Ovary (tissue), 10 donors: ENCODE measurements at regions of chr1 and their contacts with region 1.

Region 1: GRCh38 chr1:87084244-87084836 is 169.9 kb downstream of the HS2ST1 start:
- DNase-seq: no peak
- H3K4me3 ChIP-seq: no peak overlapping the region
- H3K27ac ChIP-seq: no peak overlapping the region
- H3K4me1 ChIP-seq: no peaks in the 10 kb centered on the region
- H3K27me3 ChIP-seq: no peaks in the 10 kb centered on the region
- CTCF ChIP-seq: peak; percentile 26 to 49 (median 45)
- EP300 ChIP-seq: no peak
- POLR2A ChIP-seq: no peak

Region 2: DNA sequence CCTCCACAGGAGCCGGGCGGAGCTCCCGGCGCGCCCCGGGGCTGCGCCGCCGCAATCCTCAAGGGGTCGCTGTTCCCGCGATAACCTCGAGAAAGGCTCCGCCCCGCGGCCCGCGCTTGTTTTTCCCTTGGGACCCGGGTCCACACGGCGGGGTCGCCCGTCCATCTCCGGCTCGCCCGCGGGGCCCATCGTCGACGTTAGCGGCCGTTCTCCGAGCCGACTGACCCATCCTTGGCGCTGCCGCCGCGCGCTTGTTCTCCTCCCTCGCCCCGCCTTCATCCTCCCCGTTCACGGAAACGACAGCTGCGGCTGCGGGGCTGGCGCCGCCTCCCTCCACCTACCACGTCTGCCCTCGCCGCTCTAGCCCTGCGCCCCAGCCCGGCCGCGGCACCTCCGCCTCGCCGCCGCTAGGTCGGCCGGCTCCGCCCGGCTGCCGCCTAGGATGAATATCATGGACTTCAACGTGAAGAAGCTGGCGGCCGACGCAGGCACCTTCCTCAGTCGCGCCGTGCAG is 379.8 kb before region 1 on chr1 and contains the start of gene SH3GLB1:
- intact Hi-C with region 1: loop called in 1 of 4 experiments (anchors 10 kb)
- DNase-seq: peak; percentile 87 to 95 (median 93)
- H3K4me3 ChIP-seq: peak within 1 kb of the TSS; percentile 96
- H3K27ac ChIP-seq: peak within 1 kb of the TSS; percentile 81 to 96
- H3K4me1 ChIP-seq: peaks cover 2% of the 10 kb centered on the region
- H3K27me3 ChIP-seq: no peaks in the 10 kb centered on the region
- CTCF ChIP-seq: peak; percentile 79 to 95 (median 85)
- EP300 ChIP-seq: no peak
- POLR2A ChIP-seq: peak; percentile 49
- total RNA-seq, gene SH3GLB1: 23.7 to 58.5 (median 49.5) TPM

Region 3: DNA sequence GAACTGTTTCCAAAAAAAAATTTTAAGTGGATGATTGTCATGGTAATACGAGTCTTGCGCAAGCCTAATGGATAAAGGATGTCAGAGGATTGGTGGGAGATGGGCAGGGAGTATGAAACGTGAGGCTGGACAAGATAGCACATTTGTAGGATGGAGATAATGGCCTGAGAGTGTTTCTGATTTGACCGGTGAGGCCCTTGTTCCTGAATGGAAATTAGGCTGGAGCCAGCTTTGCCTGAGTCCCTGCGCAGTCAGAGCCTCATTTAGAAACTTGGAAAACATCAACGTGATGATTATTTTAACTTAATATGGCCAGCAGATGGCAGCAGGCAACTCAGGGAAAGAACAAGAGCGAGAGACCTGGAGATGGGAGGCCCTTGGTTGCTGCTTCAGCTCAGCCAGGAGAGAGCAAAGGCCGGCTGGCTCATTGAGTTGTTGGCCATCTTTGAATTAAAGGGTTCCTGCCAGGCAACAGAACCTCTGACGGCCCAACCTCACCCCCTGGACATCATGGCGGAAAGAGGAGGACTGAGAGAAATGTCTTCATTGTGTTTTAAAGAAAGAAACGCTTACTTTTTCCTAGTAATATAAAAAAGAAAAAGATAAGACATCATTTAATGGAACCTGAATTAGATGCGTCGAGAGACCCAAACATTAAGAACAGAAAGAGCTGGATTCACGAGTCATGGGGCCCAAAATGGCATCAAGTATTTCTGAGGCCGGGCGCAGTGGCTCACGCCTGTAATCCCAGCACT is 250.7 kb before region 1 on chr1:
- intact Hi-C with region 1: loop called (anchors 5 to 10 kb)
- DNase-seq: peak; percentile 51 to 74 (median 69)
- H3K4me3 ChIP-seq: no peak overlapping the region
- H3K27ac ChIP-seq: no peak overlapping the region
- H3K4me1 ChIP-seq: no peaks in the 10 kb centered on the region
- H3K27me3 ChIP-seq: no peaks in the 10 kb centered on the region
- CTCF ChIP-seq: peak; percentile 30 to 63 (median 35)
- EP300 ChIP-seq: no peak
- POLR2A ChIP-seq: no peak

Region 4: DNA sequence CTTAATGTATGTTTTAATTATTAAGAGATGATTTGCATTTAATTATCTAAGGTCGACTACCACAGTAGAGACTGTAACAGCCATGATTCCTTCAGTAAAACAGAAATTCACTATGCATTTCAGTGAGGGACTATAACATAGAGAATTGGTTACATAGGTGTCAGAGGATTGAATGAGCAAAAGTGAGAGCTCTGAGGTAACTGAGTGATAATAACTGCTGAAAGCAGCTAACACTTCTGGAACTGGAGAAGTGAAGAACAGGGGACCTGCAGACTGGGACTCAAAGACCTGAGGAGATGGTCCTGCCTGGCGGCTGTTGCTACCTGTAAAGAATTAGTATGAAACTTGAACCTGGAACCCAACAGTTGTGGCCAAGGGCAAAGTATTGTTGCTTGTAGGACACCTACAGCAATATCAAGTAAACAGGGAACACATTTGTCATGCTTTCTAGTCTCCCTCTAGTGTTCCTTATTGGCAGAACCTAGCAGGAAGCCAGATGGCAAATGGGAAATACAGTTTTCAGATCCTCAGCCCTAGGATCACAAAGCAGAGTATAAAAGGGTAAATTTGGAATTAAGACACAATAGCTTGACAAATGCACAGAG is 59.3 kb before region 1 on chr1:
- intact Hi-C with region 1: no loop called
- DNase-seq: no peak
- H3K4me3 ChIP-seq: no peak overlapping the region
- H3K27ac ChIP-seq: no peak overlapping the region
- H3K4me1 ChIP-seq: no peaks in the 10 kb centered on the region
- H3K27me3 ChIP-seq: no peaks in the 10 kb centered on the region
- CTCF ChIP-seq: peak in 1 of 3 donors; percentile 29
- EP300 ChIP-seq: no peak
- POLR2A ChIP-seq: no peak